PC-9 (cell line): ENCODE measurements at regions of chr15 and their contacts with region 1.

Region 1: GRCh38 chr15:48855501-48856440 is 22.2 kb upstream of the EID1 start:
- DNase-seq: peak in 1 of 2 experiments; percentile 10
- H3K4me3 ChIP-seq: no peak overlapping the region
- H3K27ac ChIP-seq: no peak overlapping the region
- H3K4me1 ChIP-seq: peaks cover 11% of the 10 kb centered on the region; the same call in 1 of the 2 replicates
- H3K27me3 ChIP-seq: no peaks in the 10 kb centered on the region
- CTCF ChIP-seq: peak; percentile 37; the same call in 1 of the 2 replicates

Region 2: GRCh38 chr15:46960581-46960980 is 1895.2 kb before region 1 on chr15:
- CTCF ChIA-PET with region 1: interaction called, 16 read pairs
- POLR2A ChIA-PET with region 1: no interaction called
- intact Hi-C with region 1: no loop called
- DNase-seq: no peak
- H3K4me3 ChIP-seq: no peak overlapping the region
- H3K27ac ChIP-seq: no peak overlapping the region
- H3K4me1 ChIP-seq: no peaks in the 10 kb centered on the region
- H3K27me3 ChIP-seq: no peaks in the 10 kb centered on the region
- CTCF ChIP-seq: no peak

Region 3: DNA sequence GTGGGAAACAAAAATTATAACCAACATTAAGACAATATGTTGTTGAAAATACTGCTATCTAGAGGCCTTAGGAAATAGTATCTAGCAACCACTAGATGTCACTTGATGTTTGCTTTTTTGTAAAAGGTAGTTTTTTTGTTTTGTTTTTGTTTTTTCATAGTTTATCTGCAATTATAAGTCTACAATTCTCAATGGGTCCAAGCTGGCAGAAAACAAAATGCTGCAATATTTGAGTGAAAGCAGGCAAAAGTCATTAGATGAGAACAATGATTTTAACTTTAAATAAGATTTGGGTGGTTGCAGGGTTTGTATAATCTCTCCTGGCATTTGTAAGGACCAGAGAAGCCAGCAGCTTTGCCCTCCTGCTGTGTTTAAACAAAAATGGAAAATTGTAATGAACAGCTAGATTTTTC is 497.5 kb before region 1 on chr15:
- CTCF ChIA-PET with region 1: interaction called, 3 read pairs
- POLR2A ChIA-PET with region 1: no interaction called
- intact Hi-C with region 1: loop called (anchors 2 kb)
- DNase-seq: no peak
- H3K4me3 ChIP-seq: no peak overlapping the region
- H3K27ac ChIP-seq: no peak overlapping the region
- H3K4me1 ChIP-seq: no peaks in the 10 kb centered on the region
- H3K27me3 ChIP-seq: no peaks in the 10 kb centered on the region
- CTCF ChIP-seq: peak; percentile 70